Heart left ventricle (tissue), 16 donors: ENCODE measurements at regions of chr16 and their contacts with region 1.

Region 1: DNA sequence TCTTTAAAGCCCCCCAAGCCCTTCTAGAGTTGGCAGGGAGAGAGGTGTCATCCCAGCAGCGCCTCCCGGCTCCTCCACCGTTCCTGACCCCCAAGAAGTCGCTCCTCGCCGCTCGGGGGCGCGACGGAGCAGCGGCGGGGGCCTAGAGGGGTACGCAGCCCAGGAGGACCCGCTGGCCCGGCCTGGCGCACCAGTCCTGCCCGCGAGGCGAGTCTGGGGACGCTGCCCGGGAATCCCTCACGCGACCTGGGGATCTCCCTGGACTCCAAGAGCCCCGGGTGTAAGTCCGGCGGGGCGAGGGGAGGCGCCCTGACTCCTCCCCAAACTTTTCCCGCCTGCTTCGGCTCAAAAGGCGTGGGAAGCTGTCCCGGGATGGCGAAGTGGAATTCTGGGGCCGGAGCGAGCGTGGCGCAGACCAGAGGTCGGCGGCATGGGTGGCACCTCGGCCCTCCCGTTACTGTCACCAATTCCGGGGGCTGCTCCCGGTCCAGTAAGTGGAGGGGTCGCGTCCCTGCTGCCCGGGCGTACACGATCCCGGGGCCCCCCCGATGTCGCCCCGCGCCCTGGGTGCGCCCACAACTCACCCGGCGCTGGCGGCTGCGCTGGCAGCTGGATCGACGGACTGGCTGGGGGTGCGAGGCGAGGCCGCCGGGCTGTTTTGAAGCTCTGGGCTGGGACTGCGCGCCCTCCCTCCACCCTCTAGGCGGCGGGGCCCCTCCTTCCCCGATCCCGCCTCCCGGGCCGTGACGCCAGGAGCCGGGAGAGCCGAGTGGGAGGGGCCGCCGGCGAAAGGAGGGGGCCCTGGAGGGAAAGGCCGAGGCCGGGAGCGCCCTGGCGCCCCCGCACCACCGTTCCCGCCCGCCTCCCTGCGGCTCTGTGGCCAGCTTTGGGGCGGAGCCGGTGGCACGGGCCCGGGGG is at the start of gene EMP2:
- DNase-seq: peak; percentile 90 to 92 (median 90)
- ATAC-seq: peak; percentile 59 to 89 (median 86)
- H3K4me3 ChIP-seq: peak within 1 kb of the TSS; percentile 69 to 100 (median 93)
- H3K27ac ChIP-seq: peak within 1 kb of the TSS; percentile 85 to 99 (median 96)
- H3K4me1 ChIP-seq: peaks cover 6 to 56% (median 45%) of the 10 kb centered on the region in 12 donors
- H3K27me3 ChIP-seq: peaks cover 0 to 21% (median 0%) of the 10 kb centered on the region in 9 donors
- CTCF ChIP-seq: peak; percentile 37 to 78 (median 60)
- POLR2A ChIP-seq: peak; percentile 48 to 96
- total RNA-seq, gene EMP2: 37.8 to 103 (median 64.8) TPM

Region 2: GRCh38 chr16:10419712-10420111 is 160.5 kb before region 1 on chr16:
- intact Hi-C with region 1: no loop called
- DNase-seq: no peak
- ATAC-seq: no peak
- H3K4me3 ChIP-seq: no peak overlapping the region
- H3K27ac ChIP-seq: no peak overlapping the region
- H3K4me1 ChIP-seq: no peaks in the 10 kb centered on the region
- H3K27me3 ChIP-seq: no peaks in the 10 kb centered on the region
- CTCF ChIP-seq: no peak
- POLR2A ChIP-seq: no peak

Region 3: GRCh38 chr16:10539244-10539643 is 41.0 kb before region 1 on chr16:
- intact Hi-C with region 1: loop called in 1 of 10 experiments (anchors 10 kb)
- DNase-seq: no peak
- ATAC-seq: no peak
- H3K4me3 ChIP-seq: no peak overlapping the region
- H3K27ac ChIP-seq: no peak overlapping the region
- H3K4me1 ChIP-seq: peaks cover 0 to 6% (median 0%) of the 10 kb centered on the region in 12 donors
- H3K27me3 ChIP-seq: no peaks in the 10 kb centered on the region
- CTCF ChIP-seq: no peak
- POLR2A ChIP-seq: no peak

Region 4: GRCh38 chr16:10616730-10617555 is 36.7 kb after region 1 on chr16:
- intact Hi-C with region 1: loop called in 4 of 10 experiments (anchors 2 to 5 kb)
- DNase-seq: peak; percentile 69 to 84 (median 76)
- ATAC-seq: peak; percentile 72 to 85 (median 82)
- H3K4me3 ChIP-seq: peak overlapping the region in 1 of 12 donors; percentile 3
- H3K27ac ChIP-seq: peak overlapping the region; percentile 9 to 86 (median 64)
- H3K4me1 ChIP-seq: peaks cover 3 to 38% (median 23%) of the 10 kb centered on the region in 12 donors
- H3K27me3 ChIP-seq: no peaks in the 10 kb centered on the region
- CTCF ChIP-seq: peak in 5 of 12 donors; percentile 19 to 35 (median 21)
- POLR2A ChIP-seq: no peak

Region 5: GRCh38 chr16:10641953-10642949 is 62.0 kb after region 1 on chr16:
- intact Hi-C with region 1: no loop called
- DNase-seq: no peak
- ATAC-seq: no peak
- H3K4me3 ChIP-seq: no peak overlapping the region
- H3K27ac ChIP-seq: no peak overlapping the region
- H3K4me1 ChIP-seq: no peaks in the 10 kb centered on the region
- H3K27me3 ChIP-seq: no peaks in the 10 kb centered on the region
- CTCF ChIP-seq: no peak
- POLR2A ChIP-seq: no peak

Region 6: GRCh38 chr16:10743610-10744393 is 163.6 kb after region 1 on chr16 and contains the start of gene NUBP1:
- intact Hi-C with region 1: loop called in 6 of 10 experiments (anchors 5 kb)
- DNase-seq: peak; percentile 99
- ATAC-seq: peak; percentile 96 to 97 (median 97)
- H3K4me3 ChIP-seq: peak within 1 kb of the TSS; percentile 18 to 82 (median 64)
- H3K27ac ChIP-seq: peak within 1 kb of the TSS; percentile 95 to 100 (median 98)
- H3K4me1 ChIP-seq: peaks cover 5 to 43% (median 28%) of the 10 kb centered on the region in 12 donors
- H3K27me3 ChIP-seq: no peaks in the 10 kb centered on the region
- CTCF ChIP-seq: peak in 1 of 12 donors; percentile 7
- POLR2A ChIP-seq: peak; percentile 93 to 98
- total RNA-seq, gene NUBP1: 34.0 to 54.8 (median 47.9) TPM